IMR-90 (cell line): ENCODE measurements at regions of chr10 and their contacts with region 1.

Region 1: GRCh38 chr10:7121154-7121810 is 289.6 kb downstream of the SFMBT2 start:
- DNase-seq: peak; percentile 10
- ATAC-seq: peak; percentile 46; the same call in 1 of the 2 replicates
- H3K4me3 ChIP-seq: no peak overlapping the region
- H3K27ac ChIP-seq: no peak overlapping the region
- H3K4me1 ChIP-seq: no peaks in the 10 kb centered on the region
- H3K27me3 ChIP-seq: no peaks in the 10 kb centered on the region
- CTCF ChIP-seq: peak; percentile 31
- POLR2A ChIP-seq: no peak
- RAD21 ChIP-seq: no peak; the same call in 1 of the 2 replicates

Region 2: GRCh38 chr10:5404208-5405041 is 1716.9 kb before region 1 on chr10 and contains the start of gene TUBAL3:
- CTCF ChIA-PET with region 1: no interaction called
- POLR2A ChIA-PET with region 1: no interaction called
- dilution Hi-C with region 1: no loop called
- in situ Hi-C with region 1: no loop called
- intact Hi-C with region 1: loop called (anchors 10 kb)
- DNase-seq: no peak
- ATAC-seq: no peak
- H3K4me3 ChIP-seq: no peak within 1 kb of the TSS
- H3K27ac ChIP-seq: no peak within 1 kb of the TSS
- H3K4me1 ChIP-seq: no peaks in the 10 kb centered on the region
- H3K27me3 ChIP-seq: peaks cover 7% of the 10 kb centered on the region
- CTCF ChIP-seq: no peak
- POLR2A ChIP-seq: no peak
- RAD21 ChIP-seq: no peak
- total RNA-seq, gene TUBAL3: not detected in 2 replicates